OCI-LY7 (cell line): ENCODE measurements at regions of chr2 and their contacts with region 1.

Region 1: GRCh38 chr2:191190435-191190834 is 39.6 kb upstream of the STAT4 start:
- DNase-seq: no peak
- H3K4me3 ChIP-seq: no peak overlapping the region
- H3K27ac ChIP-seq: no peak overlapping the region
- H3K4me1 ChIP-seq: no peaks in the 10 kb centered on the region
- CTCF ChIP-seq: no peak

Region 2: DNA sequence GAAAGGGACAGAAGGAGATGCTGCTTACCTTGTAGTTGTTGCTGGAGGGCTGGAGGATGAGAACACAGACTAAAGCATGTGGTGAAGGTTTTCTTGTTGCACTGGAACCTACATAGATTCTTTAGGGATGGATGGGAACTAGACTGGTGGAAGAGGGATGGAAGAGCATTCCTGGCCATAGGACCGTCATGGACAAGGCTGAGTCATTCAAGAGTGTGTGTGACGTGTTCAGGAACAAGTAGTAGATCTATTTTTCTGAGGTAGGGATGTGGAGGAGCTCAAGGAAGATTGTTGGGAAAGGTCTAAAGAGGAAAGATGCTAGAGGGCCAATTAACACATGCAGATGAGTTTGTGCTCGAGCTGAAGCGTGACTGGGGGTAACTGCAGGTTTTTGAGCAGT is 46.2 kb before region 1 on chr2:
- CTCF ChIA-PET with region 1: no interaction called
- POLR2A ChIA-PET with region 1: no interaction called
- intact Hi-C with region 1: loop called (anchors 5 kb)
- DNase-seq: no peak
- H3K4me3 ChIP-seq: no peak overlapping the region
- H3K27ac ChIP-seq: no peak overlapping the region
- H3K4me1 ChIP-seq: no peaks in the 10 kb centered on the region
- CTCF ChIP-seq: no peak